B cell (primary cell): ENCODE measurements at regions of chrX and their contacts with region 1.

Region 1: GRCh38 chrX:129781134-129781672 is 1.5 kb downstream of the SASH3 start:
- DNase-seq: peak; percentile 86
- ATAC-seq: peak; percentile 68
- H3K4me3 ChIP-seq: peak overlapping the region; percentile 65 to 83 (median 78)
- H3K4me3 Mint-ChIP-seq: peak overlapping the region; percentile 89
- H3K27ac ChIP-seq: peak overlapping the region; percentile 97 to 99
- H3K27ac Mint-ChIP-seq: peak overlapping the region; percentile 97
- H3K4me1 ChIP-seq: peaks cover 76 to 81% of the 10 kb centered on the region in 2 donors
- H3K4me1 Mint-ChIP-seq: peaks cover 66% of the 10 kb centered on the region
- H3K27me3 ChIP-seq: no peaks in the 10 kb centered on the region
- H3K27me3 Mint-ChIP-seq: no peaks in the 10 kb centered on the region
- CTCF ChIP-seq: no peak

Region 2: GRCh38 chrX:129404430-129405008 is 376.7 kb before region 1 on chrX:
- CTCF ChIA-PET with region 1: no interaction called
- POLR2A ChIA-PET with region 1: no interaction called
- intact Hi-C with region 1: no loop called
- DNase-seq: no peak
- ATAC-seq: no peak
- H3K4me3 ChIP-seq: no peak overlapping the region
- H3K4me3 Mint-ChIP-seq: no peak overlapping the region
- H3K27ac ChIP-seq: no peak overlapping the region
- H3K27ac Mint-ChIP-seq: no peak overlapping the region
- H3K4me1 ChIP-seq: no peaks in the 10 kb centered on the region
- H3K4me1 Mint-ChIP-seq: no peaks in the 10 kb centered on the region
- H3K27me3 ChIP-seq: no peaks in the 10 kb centered on the region
- H3K27me3 Mint-ChIP-seq: no peaks in the 10 kb centered on the region
- CTCF ChIP-seq: no peak

Region 3: GRCh38 chrX:129737916-129738315 is 43.3 kb before region 1 on chrX:
- CTCF ChIA-PET with region 1: interaction called, 9 read pairs
- POLR2A ChIA-PET with region 1: interaction called, 7 read pairs
- intact Hi-C with region 1: loop called (anchors 5 kb)
- DNase-seq: peak; percentile 64
- ATAC-seq: peak; percentile 71
- H3K4me3 ChIP-seq: no peak overlapping the region
- H3K4me3 Mint-ChIP-seq: peak overlapping the region; percentile 45
- H3K27ac ChIP-seq: peak overlapping the region in 1 of 2 donors; percentile 6
- H3K27ac Mint-ChIP-seq: peak overlapping the region; percentile 83
- H3K4me1 ChIP-seq: peaks cover 26 to 28% of the 10 kb centered on the region in 2 donors
- H3K4me1 Mint-ChIP-seq: peaks cover 30% of the 10 kb centered on the region
- H3K27me3 ChIP-seq: no peaks in the 10 kb centered on the region
- H3K27me3 Mint-ChIP-seq: no peaks in the 10 kb centered on the region
- CTCF ChIP-seq: no peak

Region 4: DNA sequence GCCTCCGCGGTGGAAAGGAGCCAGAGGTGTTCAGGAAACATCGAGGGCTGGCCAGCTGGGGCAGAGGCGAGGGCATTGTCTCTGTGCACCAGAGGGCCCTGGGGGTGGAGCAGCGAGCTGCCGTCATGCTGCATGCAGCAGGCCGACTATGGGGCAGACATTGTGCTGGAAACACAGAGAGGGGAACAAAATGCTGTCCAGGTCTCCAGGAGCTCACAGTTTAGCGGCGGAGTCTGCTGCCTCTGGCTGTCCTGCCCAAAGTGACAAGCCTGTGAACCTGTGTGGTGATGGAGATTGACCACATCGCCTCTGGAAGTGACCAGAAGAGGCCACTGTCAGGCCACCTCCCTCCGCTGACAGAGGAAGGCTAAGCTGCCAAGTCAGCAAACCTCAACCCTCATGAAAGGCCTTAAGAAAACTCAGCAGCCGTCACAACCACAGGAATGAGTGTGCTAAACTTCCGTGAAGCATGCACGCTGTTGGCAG is 21.6 kb before region 1 on chrX:
- CTCF ChIA-PET with region 1: interaction called, 24 read pairs
- POLR2A ChIA-PET with region 1: interaction called, 31 read pairs
- intact Hi-C with region 1: loop called (anchors 2 kb)
- DNase-seq: peak; percentile 39
- ATAC-seq: peak; percentile 34
- H3K4me3 ChIP-seq: no peak overlapping the region
- H3K4me3 Mint-ChIP-seq: peak overlapping the region; percentile 23
- H3K27ac ChIP-seq: peak overlapping the region; percentile 11 to 55
- H3K27ac Mint-ChIP-seq: peak overlapping the region; percentile 92
- H3K4me1 ChIP-seq: peaks cover 47 to 57% of the 10 kb centered on the region in 2 donors
- H3K4me1 Mint-ChIP-seq: peaks cover 48% of the 10 kb centered on the region
- H3K27me3 ChIP-seq: no peaks in the 10 kb centered on the region
- H3K27me3 Mint-ChIP-seq: no peaks in the 10 kb centered on the region
- CTCF ChIP-seq: no peak

Region 5: GRCh38 chrX:130468395-130468923 is 687.3 kb after region 1 on chrX:
- CTCF ChIA-PET with region 1: no interaction called
- POLR2A ChIA-PET with region 1: no interaction called
- intact Hi-C with region 1: no loop called
- DNase-seq: no peak
- ATAC-seq: no peak
- H3K4me3 ChIP-seq: no peak overlapping the region
- H3K4me3 Mint-ChIP-seq: no peak overlapping the region
- H3K27ac ChIP-seq: no peak overlapping the region
- H3K27ac Mint-ChIP-seq: no peak overlapping the region
- H3K4me1 ChIP-seq: no peaks in the 10 kb centered on the region
- H3K4me1 Mint-ChIP-seq: no peaks in the 10 kb centered on the region
- H3K27me3 ChIP-seq: peaks cover 0 to 2% (median 0%) of the 10 kb centered on the region in 4 experiments
- H3K27me3 Mint-ChIP-seq: peaks cover 4% of the 10 kb centered on the region
- CTCF ChIP-seq: no peak